B cell (primary cell): ENCODE measurements at regions of chr12 and their contacts with region 1.

Region 1: DNA sequence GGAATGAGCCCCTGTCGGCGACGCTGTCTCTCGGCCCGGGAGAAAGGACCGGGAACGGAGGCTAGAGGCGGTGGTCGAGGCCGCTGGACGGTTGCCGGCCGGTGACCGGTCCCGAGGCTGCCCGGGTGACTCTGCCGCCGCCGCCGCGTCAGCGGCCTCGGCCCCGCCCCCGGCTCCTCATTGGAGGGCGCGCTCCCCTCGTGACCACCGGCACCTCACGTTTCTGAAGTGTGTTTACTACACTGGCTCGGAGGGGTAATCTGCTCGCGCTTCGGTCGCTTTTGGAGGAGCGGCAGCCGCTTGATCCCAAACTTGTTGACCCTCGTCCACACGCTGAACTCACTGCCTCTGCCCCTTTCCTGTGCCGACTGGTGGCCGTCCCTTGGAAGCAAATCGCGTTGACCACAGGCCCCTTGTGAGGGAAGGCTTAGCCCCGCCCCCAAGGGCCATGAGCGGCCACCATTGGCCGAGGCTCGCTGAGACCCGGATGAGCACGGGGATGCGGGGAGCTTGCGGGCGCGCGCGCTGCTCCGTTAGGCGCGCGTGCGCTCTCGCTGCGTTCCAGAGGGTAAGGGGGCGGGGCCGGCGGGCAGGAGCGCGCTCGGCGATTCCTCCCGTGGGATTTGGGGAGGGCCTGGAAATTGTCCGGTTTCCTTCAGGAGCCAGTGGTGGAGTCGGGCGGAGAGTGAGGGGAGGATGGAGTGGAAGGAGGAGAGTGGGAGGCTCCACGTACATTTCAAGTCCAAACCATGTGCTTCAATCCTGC is at the start of gene CRY1:
- DNase-seq: peak; percentile 94
- ATAC-seq: peak; percentile 84
- H3K4me3 ChIP-seq: peak within 1 kb of the TSS; percentile 54 to 83 (median 79)
- H3K4me3 Mint-ChIP-seq: no peak within 1 kb of the TSS
- H3K27ac ChIP-seq: peak within 1 kb of the TSS; percentile 95 to 96
- H3K27ac Mint-ChIP-seq: no peak within 1 kb of the TSS
- H3K4me1 ChIP-seq: peaks cover 16 to 24% of the 10 kb centered on the region in 2 donors
- H3K4me1 Mint-ChIP-seq: peaks cover 9% of the 10 kb centered on the region
- H3K27me3 ChIP-seq: peaks cover 0 to 8% (median 3%) of the 10 kb centered on the region in 4 experiments
- H3K27me3 Mint-ChIP-seq: peaks cover 19% of the 10 kb centered on the region
- CTCF ChIP-seq: no peak
- total RNA-seq, gene CRY1: 8.8 and 10.4 TPM in 2 replicates

Region 2: DNA sequence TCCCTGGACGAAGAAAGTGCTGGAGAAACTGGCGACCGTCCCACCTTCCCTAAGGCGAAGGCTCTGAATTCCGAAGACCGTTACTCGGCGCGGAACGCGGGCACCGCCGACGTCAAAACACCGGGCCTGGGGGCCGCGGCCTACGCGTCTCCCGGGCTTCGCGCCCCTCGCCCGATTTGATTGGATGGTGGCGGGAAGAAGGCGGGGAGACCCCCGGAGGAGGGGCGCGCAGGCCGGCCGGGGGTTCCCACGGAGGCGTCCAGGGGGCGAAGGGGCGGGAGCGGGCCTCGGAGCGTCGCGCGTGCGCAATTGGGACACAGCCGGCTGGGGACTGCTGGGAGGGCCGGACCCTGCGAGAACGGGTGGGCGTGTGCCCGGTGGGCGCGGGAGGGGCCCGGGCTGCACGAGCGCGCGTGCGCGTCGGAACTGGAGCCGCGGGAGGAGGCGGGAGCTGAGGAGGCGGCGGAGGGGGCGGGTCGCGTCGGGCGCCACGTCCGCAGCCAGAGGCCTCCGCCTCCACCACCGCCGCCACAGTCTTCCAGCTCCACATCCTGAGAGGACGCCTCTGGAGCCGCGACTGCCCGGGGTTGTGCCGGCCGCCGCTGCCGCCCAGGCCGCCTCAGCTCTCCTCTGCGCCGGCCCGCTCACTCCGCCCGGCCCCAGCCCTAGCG is 138.1 kb before region 1 on chr12 and contains the start of gene TMEM263:
- CTCF ChIA-PET with region 1: interaction called, 8 read pairs
- POLR2A ChIA-PET with region 1: no interaction called
- intact Hi-C with region 1: loop called (anchors 1 kb)
- DNase-seq: peak; percentile 94
- ATAC-seq: peak; percentile 84
- H3K4me3 ChIP-seq: peak within 1 kb of the TSS; percentile 67 to 89 (median 88)
- H3K4me3 Mint-ChIP-seq: peak within 1 kb of the TSS; percentile 99
- H3K27ac ChIP-seq: peak within 1 kb of the TSS; percentile 49 to 57
- H3K27ac Mint-ChIP-seq: peak within 1 kb of the TSS; percentile 93
- H3K4me1 ChIP-seq: peaks cover 9 to 12% of the 10 kb centered on the region in 2 donors
- H3K4me1 Mint-ChIP-seq: peaks cover 20% of the 10 kb centered on the region
- H3K27me3 ChIP-seq: no peaks in the 10 kb centered on the region
- H3K27me3 Mint-ChIP-seq: no peaks in the 10 kb centered on the region
- CTCF ChIP-seq: no peak
- total RNA-seq, gene TMEM263: 23.5 and 26.7 TPM in 2 replicates

Region 3: GRCh38 chr12:106986625-106987430 is 106.8 kb before region 1 on chr12 and contains the start of gene MTERF2:
- CTCF ChIA-PET with region 1: interaction called, 8 read pairs
- POLR2A ChIA-PET with region 1: no interaction called
- intact Hi-C with region 1: loop called (anchors 1 kb)
- DNase-seq: peak; percentile 85
- ATAC-seq: peak; percentile 98
- H3K4me3 ChIP-seq: peak within 1 kb of the TSS; percentile 80 to 91 (median 85)
- H3K4me3 Mint-ChIP-seq: peak within 1 kb of the TSS; percentile 95
- H3K27ac ChIP-seq: peak within 1 kb of the TSS; percentile 5 to 28
- H3K27ac Mint-ChIP-seq: peak within 1 kb of the TSS; percentile 77
- H3K4me1 ChIP-seq: peaks cover 13 to 16% of the 10 kb centered on the region in 2 donors
- H3K4me1 Mint-ChIP-seq: peaks cover 28% of the 10 kb centered on the region
- H3K27me3 ChIP-seq: no peaks in the 10 kb centered on the region
- H3K27me3 Mint-ChIP-seq: no peaks in the 10 kb centered on the region
- CTCF ChIP-seq: no peak
- total RNA-seq, gene MTERF2: 7.1 and 9.4 TPM in 2 replicates

Region 4: DNA sequence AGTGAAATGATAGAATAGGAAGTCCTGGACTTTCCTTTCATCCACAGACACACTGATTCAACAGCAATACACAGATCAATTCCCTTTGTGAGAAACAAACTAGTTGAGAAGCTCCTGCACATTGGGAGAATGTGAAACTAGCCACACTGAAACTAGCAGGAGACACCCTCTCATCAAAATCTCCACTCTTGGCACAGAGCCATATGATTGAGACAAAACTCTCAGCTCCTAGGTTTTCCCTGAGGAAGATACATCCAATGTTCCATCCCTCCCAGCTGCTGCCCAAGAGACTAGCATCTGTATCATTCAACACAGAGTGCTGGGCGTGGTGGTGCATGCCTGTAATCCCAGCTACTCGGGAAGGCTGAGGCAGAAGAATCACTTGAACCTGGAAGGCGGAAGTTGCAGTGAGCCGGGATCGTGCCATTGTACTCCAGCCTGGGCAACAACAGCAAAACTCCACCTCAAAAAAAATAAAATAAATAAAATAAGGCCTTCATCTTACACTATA is 54.9 kb before region 1 on chr12:
- CTCF ChIA-PET with region 1: no interaction called
- POLR2A ChIA-PET with region 1: no interaction called
- intact Hi-C with region 1: no loop called
- DNase-seq: no peak
- ATAC-seq: no peak
- H3K4me3 ChIP-seq: no peak overlapping the region
- H3K4me3 Mint-ChIP-seq: no peak overlapping the region
- H3K27ac ChIP-seq: no peak overlapping the region
- H3K27ac Mint-ChIP-seq: no peak overlapping the region
- H3K4me1 ChIP-seq: no peaks in the 10 kb centered on the region
- H3K4me1 Mint-ChIP-seq: no peaks in the 10 kb centered on the region
- H3K27me3 ChIP-seq: no peaks in the 10 kb centered on the region
- H3K27me3 Mint-ChIP-seq: peaks cover 6% of the 10 kb centered on the region
- CTCF ChIP-seq: no peak

Region 5: GRCh38 chr12:107105410-107105703 is 11.8 kb after region 1 on chr12:
- CTCF ChIA-PET with region 1: interaction called, 27 read pairs
- POLR2A ChIA-PET with region 1: interaction called, 3 read pairs
- intact Hi-C with region 1: loop called (anchors 1 kb)
- DNase-seq: no peak
- ATAC-seq: no peak
- H3K4me3 ChIP-seq: no peak overlapping the region
- H3K4me3 Mint-ChIP-seq: no peak overlapping the region
- H3K27ac ChIP-seq: no peak overlapping the region
- H3K27ac Mint-ChIP-seq: no peak overlapping the region
- H3K4me1 ChIP-seq: no peaks in the 10 kb centered on the region
- H3K4me1 Mint-ChIP-seq: no peaks in the 10 kb centered on the region
- H3K27me3 ChIP-seq: peaks cover 0 to 7% (median 6%) of the 10 kb centered on the region in 4 experiments
- H3K27me3 Mint-ChIP-seq: peaks cover 42% of the 10 kb centered on the region
- CTCF ChIP-seq: no peak

Region 6: DNA sequence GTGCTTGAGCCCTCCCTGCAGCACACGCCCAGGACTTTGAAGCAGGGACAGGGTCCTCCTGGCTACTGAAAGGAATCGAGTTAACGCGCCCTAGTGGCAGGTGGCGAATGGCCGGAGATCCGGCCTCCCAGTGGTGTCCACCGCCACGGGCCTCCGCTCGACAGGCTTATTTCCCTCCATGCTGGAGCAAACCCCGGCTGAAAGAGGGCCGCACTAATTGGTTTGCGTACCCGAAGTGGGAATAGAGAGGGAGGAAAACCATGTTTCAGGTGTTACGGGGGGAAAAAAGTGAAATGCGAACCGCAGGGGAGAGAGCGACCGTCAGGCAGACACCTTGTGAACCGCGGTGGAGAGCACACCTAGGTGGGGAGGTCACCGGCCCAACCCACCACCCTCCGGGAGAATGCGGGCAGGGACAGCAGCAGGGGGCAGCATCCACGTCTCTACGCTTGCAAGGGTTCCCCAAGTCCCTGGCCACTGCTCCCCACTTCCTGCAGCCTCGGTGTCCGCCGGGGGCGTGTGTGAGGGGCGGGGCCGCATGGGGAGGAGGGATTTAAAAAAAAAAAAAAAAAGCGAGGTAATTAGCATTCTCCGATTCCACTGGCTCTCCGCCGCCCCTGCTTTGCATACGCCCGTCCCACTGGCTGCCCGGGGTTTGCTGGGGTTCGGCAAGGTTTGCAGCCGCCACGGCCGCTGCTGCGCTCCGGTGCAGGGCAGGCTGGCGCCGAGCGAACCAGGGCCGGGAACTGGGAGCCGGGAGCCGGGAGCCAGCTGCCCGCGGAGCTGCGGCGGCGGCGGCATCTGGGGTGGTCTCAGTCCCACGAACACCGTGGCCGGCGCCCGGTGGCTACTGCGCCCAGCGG is 224.4 kb after region 1 on chr12:
- CTCF ChIA-PET with region 1: no interaction called
- POLR2A ChIA-PET with region 1: no interaction called
- intact Hi-C with region 1: no loop called
- DNase-seq: peak; percentile 66
- ATAC-seq: peak; percentile 71
- H3K4me3 ChIP-seq: peak overlapping the region in 4 of 5 experiments; percentile 34 to 46 (median 45)
- H3K4me3 Mint-ChIP-seq: peak overlapping the region; percentile 73
- H3K27ac ChIP-seq: no peak overlapping the region
- H3K27ac Mint-ChIP-seq: no peak overlapping the region
- H3K4me1 ChIP-seq: peaks cover 43 to 52% of the 10 kb centered on the region in 2 donors
- H3K4me1 Mint-ChIP-seq: peaks cover 33% of the 10 kb centered on the region
- H3K27me3 ChIP-seq: peaks cover 0 to 61% (median 38%) of the 10 kb centered on the region in 4 experiments
- H3K27me3 Mint-ChIP-seq: peaks cover 65% of the 10 kb centered on the region
- CTCF ChIP-seq: no peak

Region 7: DNA sequence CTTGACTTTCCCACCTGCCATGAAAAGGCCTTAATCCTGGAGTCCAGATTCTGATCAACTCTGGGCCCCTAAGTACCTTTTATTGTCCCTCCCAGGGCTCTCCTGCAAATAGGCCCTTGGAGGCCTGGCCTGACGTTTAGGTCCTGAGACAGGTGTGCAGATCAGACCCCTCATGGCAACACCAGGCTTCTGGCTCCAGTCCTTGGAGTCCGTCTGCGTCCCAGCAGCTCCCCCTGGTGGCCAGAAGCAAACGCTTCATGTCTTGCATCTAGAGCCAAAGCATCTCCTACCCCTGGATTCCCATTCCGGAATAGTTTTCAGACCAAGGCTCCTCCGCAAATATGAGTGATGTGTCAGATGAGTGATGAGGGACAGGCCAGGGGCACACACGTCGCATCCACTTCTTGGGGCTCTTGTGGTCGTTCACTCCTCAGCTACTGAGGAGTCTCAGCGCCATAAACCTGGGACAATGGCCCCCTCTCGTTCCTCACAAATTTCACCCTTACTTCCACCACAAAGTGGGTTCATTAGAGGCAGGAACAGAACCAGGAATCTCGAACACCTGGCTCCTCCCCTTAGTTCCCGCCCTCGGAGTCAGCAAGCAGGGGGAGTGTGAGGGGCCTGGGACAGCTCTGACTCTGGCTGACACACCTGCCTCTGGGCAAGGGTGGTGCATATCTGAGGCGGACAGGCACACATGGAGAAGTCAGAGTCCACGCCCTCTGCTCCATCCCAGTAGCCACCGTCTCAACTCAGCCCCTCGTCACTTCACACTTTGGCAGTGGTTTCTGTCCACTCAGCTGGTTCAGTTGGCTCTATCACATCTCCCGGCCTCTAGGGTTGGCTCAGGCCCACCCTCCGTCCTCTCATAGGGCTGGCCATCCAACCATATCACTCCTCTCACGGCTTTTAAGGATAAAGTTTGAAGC is 514.1 kb after region 1 on chr12:
- CTCF ChIA-PET with region 1: interaction called, 8 read pairs
- POLR2A ChIA-PET with region 1: no interaction called
- intact Hi-C with region 1: loop called (anchors 1 kb)
- DNase-seq: peak; percentile 83
- ATAC-seq: peak; percentile 39
- H3K4me3 ChIP-seq: no peak overlapping the region
- H3K4me3 Mint-ChIP-seq: no peak overlapping the region
- H3K27ac ChIP-seq: no peak overlapping the region
- H3K27ac Mint-ChIP-seq: no peak overlapping the region
- H3K4me1 ChIP-seq: no peaks in the 10 kb centered on the region
- H3K4me1 Mint-ChIP-seq: no peaks in the 10 kb centered on the region
- H3K27me3 ChIP-seq: no peaks in the 10 kb centered on the region
- H3K27me3 Mint-ChIP-seq: no peaks in the 10 kb centered on the region
- CTCF ChIP-seq: peak; percentile 93

Region 8: GRCh38 chr12:107760809-107761501 is 667.4 kb after region 1 on chr12 and contains the start of gene PRDM4:
- CTCF ChIA-PET with region 1: no interaction called
- POLR2A ChIA-PET with region 1: no interaction called
- intact Hi-C with region 1: loop called (anchors 2 kb)
- DNase-seq: peak; percentile 97
- ATAC-seq: peak; percentile 92
- H3K4me3 ChIP-seq: peak within 1 kb of the TSS; percentile 82 to 87 (median 86)
- H3K4me3 Mint-ChIP-seq: peak within 1 kb of the TSS; percentile 94
- H3K27ac ChIP-seq: peak within 1 kb of the TSS; percentile 76
- H3K27ac Mint-ChIP-seq: peak within 1 kb of the TSS; percentile 94
- H3K4me1 ChIP-seq: peaks cover 24 to 29% of the 10 kb centered on the region in 2 donors
- H3K4me1 Mint-ChIP-seq: peaks cover 34% of the 10 kb centered on the region
- H3K27me3 ChIP-seq: peaks cover 0 to 3% (median 0%) of the 10 kb centered on the region in 4 experiments
- H3K27me3 Mint-ChIP-seq: no peaks in the 10 kb centered on the region
- CTCF ChIP-seq: peak; percentile 47
- total RNA-seq, gene PRDM4: 117 TPM in 2 replicates